ENCODE measurements at regions of chr16 and their contacts with region 1.

Region 1: DNA sequence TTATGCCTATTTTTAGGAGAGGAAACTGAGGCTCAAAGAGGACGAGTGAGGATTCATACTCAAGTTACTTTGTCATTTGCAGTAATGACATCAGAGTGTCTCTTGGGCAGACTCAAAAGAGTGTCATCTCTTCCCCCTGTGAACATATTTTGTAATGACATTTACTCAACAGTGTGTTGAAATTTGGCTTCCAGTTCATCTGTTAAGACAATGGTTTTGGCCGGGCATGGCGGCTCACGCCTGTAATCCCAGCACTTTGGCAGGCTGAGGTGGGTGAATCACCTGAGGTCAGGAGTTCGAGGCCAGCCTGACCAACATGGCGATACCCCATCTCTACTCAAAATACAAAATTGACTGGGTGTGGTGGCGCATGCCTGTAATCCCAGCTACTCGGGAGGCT is 28.9 kb downstream of the WFDC1 start:
- DNase-seq: peak; percentile 20
- H3K4me3 ChIP-seq: no peak overlapping the region
- H3K27ac ChIP-seq: no peak overlapping the region
- H3K4me1 ChIP-seq: no peaks in the 10 kb centered on the region
- H3K27me3 ChIP-seq: peaks cover 2% of the 10 kb centered on the region
- CTCF ChIP-seq: no peak

Region 2: DNA sequence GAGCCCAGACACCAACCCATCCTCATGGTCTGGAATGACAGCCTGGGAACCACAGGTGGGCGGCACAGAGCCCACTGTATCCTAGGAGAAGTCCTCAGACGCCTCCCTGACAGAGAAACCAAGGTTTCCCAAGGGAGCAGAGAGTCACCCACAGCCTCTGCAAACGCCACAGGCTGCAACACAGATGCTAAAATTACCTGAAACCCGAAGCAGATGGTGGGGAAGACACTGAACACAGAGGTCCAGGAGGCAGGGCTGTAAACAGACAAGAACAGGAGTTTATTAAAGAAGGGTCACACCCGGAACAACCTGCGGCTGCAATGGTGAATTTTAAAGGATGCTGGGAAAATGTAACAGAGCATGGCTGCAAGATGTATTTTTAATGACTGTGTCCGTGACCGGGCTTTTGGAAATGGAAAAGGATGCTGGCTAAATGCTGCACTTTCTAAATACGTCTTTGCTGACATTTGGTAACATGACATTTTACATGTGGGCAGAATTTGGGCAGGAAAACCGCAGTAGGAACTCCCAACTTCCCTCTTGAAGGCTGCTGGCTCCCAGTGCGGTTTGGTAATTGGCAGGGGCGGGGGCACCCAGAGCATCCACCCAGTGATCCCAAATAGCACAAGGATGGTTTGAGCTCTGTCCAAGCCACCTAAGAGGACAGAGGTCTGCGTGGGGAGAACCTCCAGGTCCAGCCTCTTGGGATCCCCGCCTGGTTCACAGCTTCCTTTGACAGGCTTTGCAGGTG is 294.1 kb before region 1 on chr16:
- CTCF ChIA-PET with region 1: no interaction called
- dilution Hi-C with region 1: loop called (anchors 10 kb)
- in situ Hi-C with region 1: no loop called
- intact Hi-C with region 1: no loop called
- DNase-seq: no peak
- H3K4me3 ChIP-seq: no peak overlapping the region
- H3K27ac ChIP-seq: no peak overlapping the region
- H3K4me1 ChIP-seq: no peaks in the 10 kb centered on the region
- H3K27me3 ChIP-seq: no peaks in the 10 kb centered on the region
- CTCF ChIP-seq: no peak

Region 3: GRCh38 chr16:84252184-84252583 is 71.4 kb before region 1 on chr16:
- CTCF ChIA-PET with region 1: no interaction called
- dilution Hi-C with region 1: loop called (anchors 5 kb)
- in situ Hi-C with region 1: no loop called
- intact Hi-C with region 1: no loop called
- DNase-seq: no peak
- H3K4me3 ChIP-seq: no peak overlapping the region
- H3K27ac ChIP-seq: no peak overlapping the region
- H3K4me1 ChIP-seq: no peaks in the 10 kb centered on the region
- H3K27me3 ChIP-seq: no peaks in the 10 kb centered on the region
- CTCF ChIP-seq: no peak

Region 4: DNA sequence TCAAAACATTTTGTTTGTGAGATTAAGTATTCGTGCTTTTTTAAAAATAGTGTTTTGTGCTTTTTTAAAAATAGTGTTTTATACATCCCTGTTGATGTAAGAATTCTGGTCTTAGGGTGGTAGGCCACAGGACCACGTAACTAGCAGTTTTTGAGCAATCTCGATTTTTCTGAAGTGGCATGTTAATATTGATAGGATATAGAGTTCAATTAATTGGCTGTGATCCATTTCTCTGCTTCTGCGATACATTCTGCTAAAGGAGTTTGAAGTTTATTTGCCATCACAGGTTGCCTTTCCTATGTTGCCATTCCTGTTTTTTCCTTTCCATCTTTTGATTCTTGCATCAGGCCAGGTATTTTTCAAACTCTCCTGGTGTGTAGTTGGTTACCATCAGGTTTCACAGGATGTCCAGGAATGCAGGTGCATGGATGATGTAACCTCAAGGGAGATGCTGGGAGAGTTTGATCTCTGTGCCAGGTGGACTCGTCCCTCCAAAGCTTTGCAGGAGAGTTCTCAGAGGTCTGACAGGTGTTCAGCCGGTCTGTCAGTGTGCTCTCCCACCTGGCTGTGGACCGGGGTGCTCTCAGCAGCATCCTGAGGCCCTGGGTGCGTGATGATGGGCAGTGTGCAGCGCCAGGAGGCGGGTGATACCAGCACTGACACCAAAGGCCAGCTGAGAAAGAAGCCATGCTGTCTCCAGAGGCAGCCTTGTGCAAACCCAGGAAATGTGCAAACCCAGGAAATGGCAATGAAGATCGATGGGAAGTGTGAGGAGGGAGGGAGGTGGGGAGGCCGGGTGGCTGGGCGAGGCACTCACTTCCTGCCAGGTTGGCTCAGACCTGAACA is 46.3 kb after region 1 on chr16:
- CTCF ChIA-PET with region 1: no interaction called
- dilution Hi-C with region 1: loop called (anchors 5 kb)
- in situ Hi-C with region 1: no loop called
- intact Hi-C with region 1: no loop called
- DNase-seq: peak; percentile 73
- H3K4me3 ChIP-seq: no peak overlapping the region
- H3K27ac ChIP-seq: no peak overlapping the region
- H3K4me1 ChIP-seq: peaks cover 10% of the 10 kb centered on the region
- H3K27me3 ChIP-seq: peaks cover 29% of the 10 kb centered on the region
- CTCF ChIP-seq: no peak

Region 5: GRCh38 chr16:84427553-84427952 is 103.9 kb after region 1 on chr16:
- CTCF ChIA-PET with region 1: no interaction called
- dilution Hi-C with region 1: loop called (anchors 5 kb)
- in situ Hi-C with region 1: no loop called
- intact Hi-C with region 1: no loop called
- DNase-seq: no peak
- H3K4me3 ChIP-seq: no peak overlapping the region
- H3K27ac ChIP-seq: no peak overlapping the region
- H3K4me1 ChIP-seq: no peaks in the 10 kb centered on the region
- H3K27me3 ChIP-seq: no peaks in the 10 kb centered on the region
- CTCF ChIP-seq: no peak

Measured in mammary epithelial cell (primary cell).